ENCODE measurements at regions of chr5 and their contacts with region 1.

Region 1: GRCh38 chr5:131634996-131635754 is at the start of gene RAPGEF6:
- DNase-seq: peak; percentile 99
- H3K4me3 ChIP-seq: peak within 1 kb of the TSS; percentile 67 to 84
- H3K27ac ChIP-seq: peak within 1 kb of the TSS; percentile 96
- H3K4me1 ChIP-seq: peaks cover 8% of the 10 kb centered on the region
- H3K27me3 ChIP-seq: no peaks in the 10 kb centered on the region
- CTCF ChIP-seq: peak in 1 of 3 experiments; percentile 21
- POLR2A ChIP-seq: peak; percentile 87
- total RNA-seq, gene RAPGEF6: 40.1 to 59.0 TPM

Region 2: GRCh38 chr5:131382407-131383395 is 252.5 kb before region 1 on chr5:
- intact Hi-C with region 1: no loop called
- DNase-seq: no peak
- H3K4me3 ChIP-seq: no peak overlapping the region
- H3K27ac ChIP-seq: no peak overlapping the region
- H3K4me1 ChIP-seq: peaks cover 10% of the 10 kb centered on the region
- H3K27me3 ChIP-seq: no peaks in the 10 kb centered on the region
- CTCF ChIP-seq: peak in 2 of 3 experiments; percentile 11 to 23
- POLR2A ChIP-seq: no peak

Region 3: GRCh38 chr5:131466171-131466766 is 168.9 kb before region 1 on chr5:
- intact Hi-C with region 1: no loop called
- DNase-seq: no peak
- H3K4me3 ChIP-seq: no peak overlapping the region
- H3K27ac ChIP-seq: no peak overlapping the region
- H3K4me1 ChIP-seq: no peaks in the 10 kb centered on the region
- H3K27me3 ChIP-seq: no peaks in the 10 kb centered on the region
- CTCF ChIP-seq: no peak
- POLR2A ChIP-seq: no peak

Region 4: DNA sequence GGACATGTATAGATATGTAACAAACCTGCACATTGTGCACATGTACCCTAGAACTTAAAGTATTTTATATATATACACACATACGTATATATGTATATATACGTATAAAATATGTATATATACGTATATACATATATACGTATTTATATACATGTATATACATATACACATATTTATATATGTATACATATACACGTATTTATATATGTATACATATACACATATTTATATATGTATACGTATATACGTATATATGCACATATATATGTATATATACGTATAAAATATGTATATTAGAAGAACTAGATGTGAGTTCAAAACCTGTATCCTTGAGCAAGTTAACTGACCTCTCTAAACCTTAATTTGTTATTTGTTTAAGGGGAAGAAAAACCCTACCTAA is 100.2 kb after region 1 on chr5:
- intact Hi-C with region 1: no loop called
- DNase-seq: no peak
- H3K4me3 ChIP-seq: no peak overlapping the region
- H3K27ac ChIP-seq: no peak overlapping the region
- H3K4me1 ChIP-seq: no peaks in the 10 kb centered on the region
- H3K27me3 ChIP-seq: no peaks in the 10 kb centered on the region
- CTCF ChIP-seq: no peak
- POLR2A ChIP-seq: no peak

Region 5: GRCh38 chr5:131796793-131797693 is 161.9 kb after region 1 on chr5 and contains the start of gene FNIP1:
- intact Hi-C with region 1: loop called (anchors 10 kb)
- DNase-seq: peak; percentile 100
- H3K4me3 ChIP-seq: peak within 1 kb of the TSS; percentile 97 to 99
- H3K27ac ChIP-seq: peak within 1 kb of the TSS; percentile 99 to 100
- H3K4me1 ChIP-seq: peaks cover 14% of the 10 kb centered on the region
- H3K27me3 ChIP-seq: no peaks in the 10 kb centered on the region
- CTCF ChIP-seq: peak in 1 of 3 experiments; percentile 33
- POLR2A ChIP-seq: peak; percentile 82
- total RNA-seq, gene FNIP1: 60.1 to 61.3 TPM